ENCODE measurements at regions of chr5 and their contacts with region 1.

Region 1: GRCh38 chr5:159049844-159050315 is 49.8 kb downstream of the EBF1 start:
- DNase-seq: no peak
- ATAC-seq: peak; percentile 71
- H3K4me3 ChIP-seq: peak overlapping the region; percentile 19 to 22
- H3K27ac ChIP-seq: peak overlapping the region; percentile 89 to 95
- H3K4me1 ChIP-seq: peaks cover 0 to 4% of the 10 kb centered on the region in 2 donors
- H3K27me3 ChIP-seq: no peaks in the 10 kb centered on the region

Region 2: DNA sequence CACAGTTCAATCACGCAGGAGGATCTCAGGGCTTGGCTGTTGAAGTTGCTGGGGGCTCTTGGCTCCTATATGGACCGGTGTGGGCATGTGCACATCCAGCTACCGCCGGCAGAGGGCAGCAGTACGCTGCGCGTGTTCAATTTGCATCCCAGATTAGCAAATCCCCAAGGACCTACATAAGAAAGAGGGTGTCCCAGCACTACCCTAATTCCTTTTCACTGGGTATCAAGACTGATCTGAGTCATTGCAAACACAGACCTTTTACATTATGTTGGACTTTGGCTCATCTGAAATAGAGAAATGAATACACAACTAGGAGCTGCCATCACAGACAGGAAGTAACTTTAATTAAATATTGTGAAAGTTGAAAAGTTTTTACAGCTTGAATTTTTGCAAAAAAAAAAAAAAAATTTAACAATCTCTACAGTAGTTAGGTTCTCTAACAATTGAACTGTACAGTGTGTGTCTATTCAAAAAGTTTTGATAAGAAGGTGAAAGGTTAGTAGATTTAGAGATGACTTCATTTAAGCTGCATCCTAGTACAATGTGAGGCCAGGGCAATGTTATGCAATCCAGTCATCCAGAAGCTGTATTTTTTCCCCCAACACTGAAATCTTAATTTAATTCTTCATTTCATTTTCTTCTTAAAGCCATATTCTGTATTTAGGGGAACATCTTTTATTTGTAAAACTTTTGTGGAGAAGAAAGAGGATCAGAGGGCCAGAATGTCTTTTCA is 354.1 kb before region 1 on chr5:
- intact Hi-C with region 1: loop called in 1 of 2 experiments (anchors 5 kb)
- DNase-seq: peak; percentile 79 to 92
- ATAC-seq: peak; percentile 86
- H3K4me3 ChIP-seq: no peak overlapping the region
- H3K27ac ChIP-seq: no peak overlapping the region
- H3K4me1 ChIP-seq: peaks cover 2 to 18% of the 10 kb centered on the region in 2 donors
- H3K27me3 ChIP-seq: no peaks in the 10 kb centered on the region

Region 3: GRCh38 chr5:158875272-158875679 is 174.6 kb before region 1 on chr5:
- intact Hi-C with region 1: loop called in 1 of 2 experiments (anchors 10 kb)
- DNase-seq: no peak
- ATAC-seq: peak; percentile 40
- H3K4me3 ChIP-seq: peak overlapping the region; percentile 26 to 87
- H3K27ac ChIP-seq: peak overlapping the region in 1 of 2 donors; percentile 87
- H3K4me1 ChIP-seq: peaks cover 6 to 29% of the 10 kb centered on the region in 2 donors
- H3K27me3 ChIP-seq: no peaks in the 10 kb centered on the region

Region 4: DNA sequence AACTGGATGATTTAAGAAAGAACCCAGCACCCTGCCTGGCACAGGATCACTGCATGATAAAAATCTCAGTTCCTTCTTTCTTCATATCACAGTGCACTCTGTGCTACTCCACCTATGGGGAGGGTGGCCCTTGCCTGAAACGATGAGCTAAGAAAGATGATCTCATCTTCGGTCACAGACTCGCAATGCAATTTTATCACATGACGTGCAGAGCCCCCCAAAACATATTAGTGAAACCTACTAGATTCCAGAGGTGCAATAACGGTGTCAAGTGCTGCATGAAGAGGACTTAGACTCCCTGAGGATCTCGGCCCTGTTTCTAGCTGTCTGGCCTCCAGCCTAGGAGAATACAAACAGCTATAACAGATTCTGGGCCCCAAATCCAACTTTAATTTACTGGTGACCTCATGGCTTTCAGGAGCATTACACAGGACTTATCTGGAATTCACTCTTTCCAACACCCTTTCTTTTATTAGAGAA is 54.1 kb before region 1 on chr5:
- intact Hi-C with region 1: loop called in 1 of 2 experiments (anchors 10 kb)
- DNase-seq: no peak
- ATAC-seq: peak; percentile 33
- H3K4me3 ChIP-seq: no peak overlapping the region
- H3K27ac ChIP-seq: peak overlapping the region; percentile 57 to 72
- H3K4me1 ChIP-seq: peaks cover 7 to 14% of the 10 kb centered on the region in 2 donors
- H3K27me3 ChIP-seq: no peaks in the 10 kb centered on the region

Region 5: GRCh38 chr5:159005062-159005461 is 44.8 kb before region 1 on chr5:
- intact Hi-C with region 1: loop called in 1 of 2 experiments (anchors 5 kb)
- DNase-seq: no peak
- ATAC-seq: no peak
- H3K4me3 ChIP-seq: no peak overlapping the region
- H3K27ac ChIP-seq: no peak overlapping the region
- H3K4me1 ChIP-seq: peaks cover 2 to 17% of the 10 kb centered on the region in 2 donors
- H3K27me3 ChIP-seq: no peaks in the 10 kb centered on the region

Region 6: DNA sequence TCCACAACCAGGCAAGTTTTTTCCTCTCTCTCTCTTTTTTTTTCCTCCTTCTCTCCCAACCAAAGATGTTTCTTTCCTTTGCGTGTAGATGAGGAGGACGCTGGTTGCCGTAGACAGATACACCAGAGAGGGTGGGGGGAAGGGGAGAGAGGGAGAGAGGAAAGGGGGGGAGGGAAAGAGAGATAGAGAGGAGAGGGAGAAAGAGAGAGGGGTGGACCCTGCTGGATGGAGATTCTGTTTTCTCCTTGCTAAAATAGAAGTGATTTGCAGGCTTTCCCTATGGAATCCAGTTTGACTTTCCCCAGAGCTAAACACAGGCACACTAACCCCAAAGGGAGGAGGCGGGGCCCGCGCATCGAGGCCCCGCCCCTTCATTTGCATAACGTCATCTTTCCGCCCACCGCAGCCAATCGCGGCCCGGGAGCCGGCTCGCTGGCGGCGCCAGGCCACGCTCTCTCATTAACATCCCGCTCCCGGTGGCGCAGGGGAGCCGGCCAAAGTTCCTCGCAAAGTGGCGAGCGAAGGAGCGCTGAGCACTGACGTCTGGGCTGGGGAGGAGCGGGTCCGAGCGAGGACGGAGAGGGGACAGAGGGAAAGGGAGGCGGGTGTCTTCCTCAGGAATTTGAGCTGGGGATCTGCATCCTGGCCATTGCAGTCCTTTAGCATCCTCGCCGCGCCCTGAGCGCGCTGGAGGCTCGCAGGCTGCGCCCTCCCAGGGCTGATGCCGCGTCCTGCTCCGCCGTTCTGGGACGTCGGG is 50.3 kb after region 1 on chr5:
- intact Hi-C with region 1: loop called (anchors 2 to 5 kb)
- DNase-seq: peak; percentile 95 to 97
- ATAC-seq: peak; percentile 94
- H3K4me3 ChIP-seq: peak overlapping the region; percentile 55 to 94
- H3K27ac ChIP-seq: peak overlapping the region; percentile 17 to 80
- H3K4me1 ChIP-seq: no peaks in the 10 kb centered on the region
- H3K27me3 ChIP-seq: no peaks in the 10 kb centered on the region

Measured in aorta (tissue), 5 donors.